Prostate gland (tissue), 2 donors: ENCODE measurements at regions of chr2 and their contacts with region 1.

Region 1: DNA sequence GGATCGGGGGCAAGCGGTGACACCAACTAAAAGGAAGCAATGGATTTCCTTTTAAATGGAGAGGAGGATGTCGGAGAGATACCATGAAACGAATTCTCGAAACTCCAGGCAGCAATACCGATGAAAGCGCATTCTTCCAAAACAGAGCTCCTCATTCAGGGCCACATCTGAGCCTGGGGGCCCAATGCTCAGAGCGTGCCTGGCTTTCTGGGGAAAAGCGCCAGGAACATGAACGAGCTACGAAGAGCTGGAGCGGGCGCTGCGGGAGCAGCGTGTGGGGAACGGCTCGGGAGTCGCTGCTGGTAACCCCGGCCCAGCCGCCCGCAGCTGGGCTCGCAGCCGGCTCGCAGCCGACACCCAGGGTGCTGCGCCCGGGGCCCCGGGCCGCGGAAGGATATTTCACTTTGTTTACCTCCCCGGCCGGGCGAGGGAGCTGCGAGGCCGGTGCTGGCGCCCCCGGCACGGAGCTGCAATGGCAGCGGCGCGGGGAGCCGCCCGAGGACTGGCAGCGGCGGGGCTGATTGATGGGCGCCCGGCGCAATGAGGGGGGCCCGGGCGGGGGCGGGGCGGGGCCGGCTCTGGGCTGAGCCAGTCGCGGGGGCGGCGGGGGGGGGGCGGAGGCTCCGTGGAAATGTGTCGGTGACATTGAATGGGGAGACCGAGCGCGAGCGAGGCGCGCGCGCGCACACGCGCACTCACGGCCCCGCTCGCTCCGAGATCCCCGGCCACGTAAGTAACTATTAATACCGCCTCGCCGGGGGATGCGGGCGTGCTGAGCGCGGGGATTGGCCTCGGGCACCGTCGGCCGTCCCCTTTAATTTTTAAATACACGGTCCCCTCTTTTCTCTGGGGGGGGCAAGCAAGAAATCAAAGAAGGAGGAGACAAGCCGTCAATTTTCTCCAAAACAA is at the start of gene TRIB2:
- DNase-seq: peak; percentile 87
- H3K4me3 ChIP-seq: peak within 1 kb of the TSS; percentile 56 to 71
- H3K27ac ChIP-seq: peak within 1 kb of the TSS; percentile 86 to 88
- H3K4me1 ChIP-seq: no peaks in the 10 kb centered on the region
- H3K27me3 ChIP-seq: no peaks in the 10 kb centered on the region
- CTCF ChIP-seq: peak in 1 of 4 experiments; percentile 33
- POLR2A ChIP-seq: peak; percentile 25
- total RNA-seq, gene TRIB2: 72.3 to 205 TPM

Region 2: DNA sequence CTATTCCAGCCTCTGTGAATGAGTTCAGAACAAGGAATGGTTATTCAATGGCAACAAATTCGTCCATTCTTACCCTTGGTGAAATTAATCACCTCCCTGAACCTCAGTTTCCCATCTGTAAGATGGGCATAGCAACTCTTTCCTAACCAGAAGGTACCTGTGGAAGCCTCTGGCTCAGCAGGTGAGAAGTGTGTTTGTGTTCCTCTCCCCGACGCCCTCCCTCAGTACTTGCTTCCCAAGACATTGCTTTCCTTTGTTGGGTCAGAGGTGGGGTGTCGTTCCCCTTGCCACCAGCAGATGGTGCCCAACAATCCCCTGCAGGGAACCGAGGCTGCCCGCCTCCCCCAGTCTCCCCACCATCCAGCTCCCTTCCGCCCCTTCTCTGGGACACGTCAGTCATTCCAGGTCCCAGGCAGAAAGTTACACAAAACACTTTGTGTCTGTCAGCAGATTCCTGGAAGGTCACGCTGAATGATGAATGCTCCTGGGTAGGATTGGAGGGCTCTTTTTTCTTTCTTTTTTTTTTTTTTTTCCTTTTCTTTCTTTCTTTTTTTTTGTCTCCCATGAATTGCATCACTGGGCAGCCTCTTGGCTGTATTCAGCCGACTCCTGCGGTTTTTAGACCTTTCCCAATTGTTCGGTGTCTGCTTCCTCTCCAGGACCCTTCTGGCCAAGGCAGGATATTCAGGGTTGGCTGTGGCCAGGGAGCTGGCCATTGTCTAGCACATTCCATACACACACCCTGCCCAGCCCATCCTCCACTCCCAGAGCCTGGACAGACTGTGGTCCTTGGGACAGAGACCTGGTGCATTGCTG is 852.8 kb before region 1 on chr2:
- intact Hi-C with region 1: loop called (anchors 5 kb)
- DNase-seq: peak; percentile 81
- H3K4me3 ChIP-seq: no peak overlapping the region
- H3K27ac ChIP-seq: no peak overlapping the region
- H3K4me1 ChIP-seq: no peaks in the 10 kb centered on the region
- H3K27me3 ChIP-seq: no peaks in the 10 kb centered on the region
- CTCF ChIP-seq: peak; percentile 91 to 95 (median 94)
- POLR2A ChIP-seq: no peak

Region 3: GRCh38 chr2:12236136-12236844 is 480.2 kb before region 1 on chr2:
- intact Hi-C with region 1: loop called (anchors 5 kb)
- DNase-seq: no peak
- H3K4me3 ChIP-seq: no peak overlapping the region
- H3K27ac ChIP-seq: no peak overlapping the region
- H3K4me1 ChIP-seq: no peaks in the 10 kb centered on the region
- H3K27me3 ChIP-seq: no peaks in the 10 kb centered on the region
- CTCF ChIP-seq: no peak
- POLR2A ChIP-seq: no peak

Region 4: DNA sequence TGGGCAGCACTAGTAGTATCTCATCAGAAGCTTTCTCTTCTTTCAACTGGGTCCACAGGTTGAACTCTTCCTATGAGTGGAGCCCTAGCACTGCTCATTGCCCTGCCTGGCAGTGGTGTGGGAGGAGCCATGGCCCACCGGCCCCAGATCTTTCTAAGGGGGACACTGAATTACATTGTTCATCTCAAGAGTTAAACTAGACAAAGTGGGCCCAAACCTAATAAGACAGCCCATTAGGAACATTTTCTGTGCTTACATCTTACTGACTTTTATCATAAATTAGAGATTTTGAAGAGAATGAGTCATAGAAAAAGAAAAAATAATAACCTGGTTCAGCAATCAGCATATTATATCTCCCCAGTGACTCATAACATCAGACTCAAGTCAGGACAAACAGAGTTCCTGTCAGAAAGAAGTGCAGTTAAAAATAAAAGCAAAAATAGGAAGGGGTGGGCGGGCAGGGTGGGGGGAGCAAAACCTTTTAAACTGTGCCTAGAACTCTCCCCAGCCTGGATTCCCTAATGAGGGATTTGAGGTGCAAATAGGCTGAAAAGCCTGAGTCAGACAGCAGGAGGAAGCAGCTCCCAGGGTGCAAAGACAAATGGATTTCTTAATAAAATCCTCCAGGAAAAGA is 161.4 kb before region 1 on chr2:
- intact Hi-C with region 1: loop called (anchors 5 kb)
- DNase-seq: no peak
- H3K4me3 ChIP-seq: no peak overlapping the region
- H3K27ac ChIP-seq: no peak overlapping the region
- H3K4me1 ChIP-seq: no peaks in the 10 kb centered on the region
- H3K27me3 ChIP-seq: no peaks in the 10 kb centered on the region
- CTCF ChIP-seq: no peak
- POLR2A ChIP-seq: no peak

Region 5: GRCh38 chr2:12797815-12798214 is 81.3 kb after region 1 on chr2:
- intact Hi-C with region 1: no loop called
- DNase-seq: no peak
- H3K4me3 ChIP-seq: no peak overlapping the region
- H3K27ac ChIP-seq: no peak overlapping the region
- H3K4me1 ChIP-seq: no peaks in the 10 kb centered on the region
- H3K27me3 ChIP-seq: no peaks in the 10 kb centered on the region
- CTCF ChIP-seq: no peak
- POLR2A ChIP-seq: no peak

Region 6: DNA sequence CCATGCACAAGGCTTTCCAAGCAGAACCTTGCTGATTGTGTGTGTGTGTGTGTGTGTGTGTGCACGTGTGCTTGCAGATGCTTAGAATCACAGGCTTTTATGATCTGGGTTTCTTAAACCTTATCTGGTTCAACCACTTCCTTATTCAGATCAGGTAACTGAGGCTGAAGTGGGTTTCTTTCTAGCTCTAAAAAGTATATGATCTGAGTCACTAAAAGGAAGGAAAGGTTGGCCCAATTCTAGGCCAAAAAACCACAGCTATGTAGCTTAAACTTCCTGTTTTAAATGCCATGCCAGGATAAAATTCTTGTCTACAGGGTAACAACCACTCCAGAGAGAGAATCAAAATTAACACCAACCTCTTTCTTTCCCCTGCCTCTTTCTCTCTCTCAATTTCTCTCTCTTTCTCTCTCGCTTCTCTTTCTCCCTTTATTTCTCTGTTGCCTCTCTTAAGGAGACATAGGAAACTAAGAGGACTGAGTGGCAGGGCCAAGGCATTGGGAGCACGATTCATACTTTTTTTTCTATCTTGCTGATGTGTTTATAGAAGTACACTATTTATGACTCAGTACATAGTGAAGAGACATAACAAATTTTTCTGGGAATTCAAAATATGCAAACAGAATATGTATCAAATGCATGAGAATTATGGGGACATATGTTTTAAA is 140.5 kb after region 1 on chr2:
- intact Hi-C with region 1: no loop called
- DNase-seq: no peak
- H3K4me3 ChIP-seq: no peak overlapping the region
- H3K27ac ChIP-seq: no peak overlapping the region
- H3K4me1 ChIP-seq: no peaks in the 10 kb centered on the region
- H3K27me3 ChIP-seq: no peaks in the 10 kb centered on the region
- CTCF ChIP-seq: no peak
- POLR2A ChIP-seq: no peak

Region 7: DNA sequence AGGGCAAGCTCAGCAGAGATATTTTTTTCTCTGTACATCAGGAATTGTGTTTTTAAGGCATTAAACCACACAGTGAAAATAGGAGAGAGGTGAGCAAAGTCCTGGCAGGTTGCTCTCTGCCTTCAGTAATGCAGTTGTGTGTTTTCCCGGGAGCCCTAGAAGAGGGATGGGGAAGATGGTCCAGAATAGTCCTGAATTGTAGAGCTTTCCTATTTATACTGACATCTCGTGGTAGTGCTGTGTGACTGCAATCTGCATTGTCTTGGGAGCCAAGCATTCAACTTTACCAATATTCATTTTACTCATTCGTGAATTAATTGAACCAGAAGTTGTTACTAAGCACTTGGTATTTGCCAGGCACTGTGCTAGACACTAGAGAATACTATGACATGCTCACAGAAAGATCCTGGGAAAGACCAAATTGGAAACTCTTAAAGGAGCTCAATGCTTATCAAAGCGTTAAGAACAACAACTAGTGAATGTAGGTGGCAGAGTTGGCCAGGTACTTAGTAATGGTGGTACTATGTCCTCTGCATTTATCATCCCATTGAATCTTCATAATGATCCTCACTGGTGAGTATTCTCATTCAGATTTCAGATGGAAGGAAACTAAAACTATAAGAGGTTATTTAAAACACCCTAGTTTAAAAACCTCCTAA is 214.8 kb after region 1 on chr2:
- intact Hi-C with region 1: loop called (anchors 5 kb)
- DNase-seq: peak; percentile 10
- H3K4me3 ChIP-seq: no peak overlapping the region
- H3K27ac ChIP-seq: no peak overlapping the region
- H3K4me1 ChIP-seq: no peaks in the 10 kb centered on the region
- H3K27me3 ChIP-seq: no peaks in the 10 kb centered on the region
- CTCF ChIP-seq: peak; percentile 46 to 85 (median 80)
- POLR2A ChIP-seq: no peak